CD8-positive, alpha-beta memory T cell (primary cell): ENCODE measurements at regions of chr12 and their contacts with region 1.

Region 1: GRCh38 chr12:22624870-22625761 is at the start of gene ETNK1:
- DNase-seq: peak; percentile 76 to 84 (median 83)
- H3K4me3 ChIP-seq: peak within 1 kb of the TSS; percentile 91
- H3K4me3 Mint-ChIP-seq: peak within 1 kb of the TSS; percentile 88 to 97 (median 92)
- H3K27ac ChIP-seq: peak within 1 kb of the TSS; percentile 88
- H3K27ac Mint-ChIP-seq: peak within 1 kb of the TSS; percentile 85 to 99 (median 95)
- H3K4me1 ChIP-seq: peaks cover 21% of the 10 kb centered on the region
- H3K4me1 Mint-ChIP-seq: peaks cover 44 to 51% (median 49%) of the 10 kb centered on the region in 3 donors
- H3K27me3 ChIP-seq: no peaks in the 10 kb centered on the region
- H3K27me3 Mint-ChIP-seq: peaks cover 0 to 9% of the 10 kb centered on the region in 2 donors
- total RNA-seq, gene ETNK1: 76.7 to 78.4 TPM

Region 2: DNA sequence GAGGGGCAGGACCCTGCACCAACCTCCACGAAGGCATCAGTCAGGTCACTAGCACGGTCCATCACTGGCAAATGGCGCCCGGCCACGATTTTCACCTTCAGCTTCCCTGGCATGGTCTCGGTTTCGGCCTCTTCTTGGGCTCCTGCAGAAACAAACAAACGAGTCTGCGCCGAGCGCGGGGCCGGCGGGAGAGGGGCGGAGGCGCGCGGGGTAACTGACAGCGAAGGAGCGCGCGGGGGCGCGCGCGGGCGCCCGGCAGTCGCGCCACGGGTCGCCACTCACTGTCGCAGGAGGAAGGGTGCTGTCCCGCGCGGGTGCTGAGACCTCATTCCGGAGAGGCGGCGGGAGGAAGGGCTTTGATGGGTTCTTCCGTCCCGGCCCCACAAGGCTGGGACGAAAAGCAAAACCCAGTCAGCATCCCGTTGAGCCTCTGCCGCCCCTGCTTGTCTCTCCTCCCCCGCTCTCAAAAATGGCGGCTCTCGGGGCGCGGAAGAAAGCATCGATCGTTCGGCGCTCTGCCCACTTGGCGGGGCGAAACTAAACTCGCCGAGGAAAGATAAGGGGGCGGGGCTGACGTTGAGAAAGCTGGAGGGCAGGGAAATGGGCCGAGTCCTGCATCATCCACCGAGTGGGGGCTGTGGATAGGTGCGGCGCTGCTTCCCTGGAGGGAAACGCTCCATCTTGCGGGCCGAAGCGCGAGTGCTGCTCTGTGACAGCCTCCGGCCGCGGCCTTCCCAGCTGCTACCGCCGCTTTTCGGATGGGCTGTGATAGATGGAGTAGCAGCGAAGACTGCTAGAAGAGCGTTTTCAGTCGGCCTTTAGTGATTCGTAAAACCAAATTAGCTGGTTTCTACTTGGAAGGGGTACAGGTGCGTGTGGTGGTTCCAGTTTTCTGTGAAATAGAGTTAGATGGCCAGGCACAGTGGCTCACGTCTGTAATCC is 80.8 kb before region 1 on chr12 and contains the start of gene C2CD5:
- CTCF ChIA-PET with region 1: interaction called, 5 read pairs
- POLR2A ChIA-PET with region 1: interaction called, 17 read pairs
- DNase-seq: peak; percentile 89 to 96 (median 94)
- H3K4me3 ChIP-seq: peak within 1 kb of the TSS; percentile 96
- H3K4me3 Mint-ChIP-seq: peak within 1 kb of the TSS; percentile 95 to 98 (median 96)
- H3K27ac ChIP-seq: peak within 1 kb of the TSS; percentile 84
- H3K27ac Mint-ChIP-seq: peak within 1 kb of the TSS; percentile 88 to 99 (median 96)
- H3K4me1 ChIP-seq: peaks cover 27% of the 10 kb centered on the region
- H3K4me1 Mint-ChIP-seq: peaks cover 37 to 44% (median 40%) of the 10 kb centered on the region in 3 donors
- H3K27me3 ChIP-seq: no peaks in the 10 kb centered on the region
- H3K27me3 Mint-ChIP-seq: peaks cover 7 to 9% of the 10 kb centered on the region in 2 donors
- total RNA-seq, gene C2CD5: 25.3 to 26.2 TPM

Region 3: GRCh38 chr12:22598763-22599161 is 26.4 kb before region 1 on chr12:
- CTCF ChIA-PET with region 1: no interaction called
- POLR2A ChIA-PET with region 1: no interaction called
- DNase-seq: no peak
- H3K4me3 ChIP-seq: no peak overlapping the region
- H3K4me3 Mint-ChIP-seq: no peak overlapping the region
- H3K27ac ChIP-seq: no peak overlapping the region
- H3K27ac Mint-ChIP-seq: no peak overlapping the region
- H3K4me1 ChIP-seq: no peaks in the 10 kb centered on the region
- H3K4me1 Mint-ChIP-seq: peaks cover 0 to 6% (median 6%) of the 10 kb centered on the region in 3 donors
- H3K27me3 ChIP-seq: no peaks in the 10 kb centered on the region
- H3K27me3 Mint-ChIP-seq: peaks cover 1 to 13% of the 10 kb centered on the region in 2 donors